WTC11 (cell line): ENCODE measurements at regions of chr4 and their contacts with region 1.

Region 1: GRCh38 chr4:123747016-123747415 is 350.4 kb downstream of the SPRY1 start:
- DNase-seq: peak; percentile 26
- ATAC-seq: peak; percentile 76
- H3K4me3 Mint-ChIP-seq: no peak overlapping the region
- H3K27ac Mint-ChIP-seq: peak overlapping the region; percentile 87; the same call in 1 of the 2 replicates
- H3K4me1 Mint-ChIP-seq: peaks cover 33% of the 10 kb centered on the region
- H3K27me3 Mint-ChIP-seq: no peaks in the 10 kb centered on the region
- CTCF ChIP-seq: no peak

Region 2: DNA sequence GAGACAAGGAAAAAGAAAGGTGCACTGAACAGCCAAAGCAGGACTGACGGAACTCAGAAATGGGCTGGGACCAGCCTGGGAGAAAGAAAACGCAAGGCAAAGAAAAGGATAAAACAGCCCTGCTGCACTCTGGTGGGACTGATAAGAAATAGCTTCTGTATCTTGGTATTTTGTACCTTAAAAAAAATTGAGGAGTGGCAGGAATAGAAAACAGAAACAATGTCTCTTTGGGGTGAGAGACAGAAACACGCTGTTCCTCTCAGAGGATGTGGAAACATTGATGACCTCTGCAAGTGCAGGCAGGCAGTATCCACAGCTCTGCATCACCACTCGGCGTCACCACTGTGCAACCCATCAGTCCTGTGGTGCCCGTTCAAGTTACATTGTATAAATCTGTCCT is 502.9 kb before region 1 on chr4:
- CTCF ChIA-PET with region 1: no interaction called
- POLR2A ChIA-PET with region 1: no interaction called
- DNase-seq: no peak
- ATAC-seq: peak; percentile 77; the same call in 1 of the 2 replicates
- H3K4me3 Mint-ChIP-seq: no peak overlapping the region
- H3K27ac Mint-ChIP-seq: no peak overlapping the region
- H3K4me1 Mint-ChIP-seq: peaks cover 4% of the 10 kb centered on the region
- H3K27me3 Mint-ChIP-seq: no peaks in the 10 kb centered on the region
- CTCF ChIP-seq: no peak

Region 3: DNA sequence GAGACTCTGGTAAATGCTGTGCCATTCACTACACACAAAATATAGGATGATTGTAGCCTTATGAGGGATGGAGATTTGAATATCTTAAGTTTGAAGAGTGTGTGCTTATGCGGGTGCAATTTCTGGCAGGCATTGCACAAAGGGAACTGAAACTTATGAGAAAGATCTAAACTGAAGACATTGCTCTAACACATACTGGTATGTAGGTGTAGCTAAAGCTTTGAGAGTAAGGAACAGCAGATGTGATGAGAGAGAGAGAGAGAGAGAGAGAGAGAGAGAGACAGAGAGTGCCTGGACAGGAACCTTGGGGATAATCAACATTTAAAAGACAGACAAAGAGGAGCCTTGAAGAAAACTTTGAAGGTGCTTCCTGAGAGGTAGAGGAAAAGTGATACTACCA is 29.2 kb after region 1 on chr4:
- CTCF ChIA-PET with region 1: interaction called, 10 read pairs
- POLR2A ChIA-PET with region 1: no interaction called
- DNase-seq: no peak
- ATAC-seq: no peak
- H3K4me3 Mint-ChIP-seq: no peak overlapping the region
- H3K27ac Mint-ChIP-seq: no peak overlapping the region
- H3K4me1 Mint-ChIP-seq: peaks cover 5% of the 10 kb centered on the region
- H3K27me3 Mint-ChIP-seq: no peaks in the 10 kb centered on the region
- CTCF ChIP-seq: no peak

Region 4: GRCh38 chr4:124018383-124019317 is 271.6 kb after region 1 on chr4:
- CTCF ChIA-PET with region 1: no interaction called
- POLR2A ChIA-PET with region 1: no interaction called
- DNase-seq: no peak
- ATAC-seq: peak; percentile 39; the same call in 1 of the 2 replicates
- H3K4me3 Mint-ChIP-seq: no peak overlapping the region
- H3K27ac Mint-ChIP-seq: no peak overlapping the region
- H3K4me1 Mint-ChIP-seq: peaks cover 7% of the 10 kb centered on the region
- H3K27me3 Mint-ChIP-seq: no peaks in the 10 kb centered on the region
- CTCF ChIP-seq: no peak